ENCODE measurements at regions of chr2 and their contacts with region 1.

Region 1: DNA sequence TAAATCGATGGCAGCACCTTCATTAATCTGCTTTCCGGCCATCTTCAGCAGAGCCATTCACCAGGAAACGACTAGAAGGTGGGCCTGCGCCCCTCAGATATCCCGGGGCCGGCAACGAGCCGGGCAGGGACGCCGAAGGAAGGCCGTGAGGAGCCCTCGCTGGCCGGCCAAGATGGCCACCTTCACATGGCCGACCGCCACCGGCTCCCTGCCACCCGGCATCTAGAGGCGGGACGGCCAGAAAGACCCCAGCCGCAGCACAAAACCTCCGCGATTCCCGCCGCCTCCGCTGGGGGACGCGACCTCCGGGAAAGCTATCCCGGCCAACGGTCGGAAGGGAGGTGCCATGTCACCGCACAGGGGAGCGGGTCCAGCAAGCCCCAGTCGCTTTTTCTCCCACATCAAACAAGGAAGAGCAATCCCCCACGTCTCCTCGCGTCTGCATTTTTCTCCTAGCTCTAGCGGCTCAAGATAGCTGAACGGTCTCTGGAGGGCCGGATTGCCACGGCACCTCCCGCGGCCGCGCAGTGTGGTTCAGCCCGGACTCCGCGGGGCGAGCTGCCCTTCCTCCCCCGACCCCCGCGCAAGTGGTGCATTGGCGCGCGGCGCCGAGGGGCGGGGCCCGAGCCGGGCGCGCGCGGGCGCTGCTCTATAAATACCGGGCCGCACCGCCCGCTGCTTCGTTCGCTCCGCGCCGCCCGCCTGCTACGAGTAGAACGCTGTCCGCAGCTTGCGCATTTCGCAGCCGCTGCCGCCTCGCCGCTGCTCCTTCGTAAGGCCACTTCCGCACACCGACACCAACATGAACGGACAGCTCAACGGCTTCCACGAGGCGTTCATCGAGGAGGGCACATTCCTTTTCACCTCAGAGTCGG is at the start of gene MAT2A:
- DNase-seq: peak; percentile 98
- H3K4me3 Mint-ChIP-seq: peak within 1 kb of the TSS; percentile 79
- H3K27ac Mint-ChIP-seq: peak within 1 kb of the TSS; percentile 99
- H3K4me1 Mint-ChIP-seq: peaks cover 35% of the 10 kb centered on the region
- H3K27me3 Mint-ChIP-seq: no peaks in the 10 kb centered on the region
- CTCF ChIP-seq: peak; percentile 73
- total RNA-seq, gene MAT2A: 387 and 393 TPM in 2 replicates

Region 2: GRCh38 chr2:85291425-85292023 is 247.2 kb before region 1 on chr2:
- CTCF ChIA-PET with region 1: no interaction called
- intact Hi-C with region 1: no loop called
- DNase-seq: no peak
- H3K4me3 Mint-ChIP-seq: no peak overlapping the region
- H3K27ac Mint-ChIP-seq: peak overlapping the region; percentile 55
- H3K4me1 Mint-ChIP-seq: peaks cover 56% of the 10 kb centered on the region
- H3K27me3 Mint-ChIP-seq: no peaks in the 10 kb centered on the region
- CTCF ChIP-seq: no peak

Region 3: DNA sequence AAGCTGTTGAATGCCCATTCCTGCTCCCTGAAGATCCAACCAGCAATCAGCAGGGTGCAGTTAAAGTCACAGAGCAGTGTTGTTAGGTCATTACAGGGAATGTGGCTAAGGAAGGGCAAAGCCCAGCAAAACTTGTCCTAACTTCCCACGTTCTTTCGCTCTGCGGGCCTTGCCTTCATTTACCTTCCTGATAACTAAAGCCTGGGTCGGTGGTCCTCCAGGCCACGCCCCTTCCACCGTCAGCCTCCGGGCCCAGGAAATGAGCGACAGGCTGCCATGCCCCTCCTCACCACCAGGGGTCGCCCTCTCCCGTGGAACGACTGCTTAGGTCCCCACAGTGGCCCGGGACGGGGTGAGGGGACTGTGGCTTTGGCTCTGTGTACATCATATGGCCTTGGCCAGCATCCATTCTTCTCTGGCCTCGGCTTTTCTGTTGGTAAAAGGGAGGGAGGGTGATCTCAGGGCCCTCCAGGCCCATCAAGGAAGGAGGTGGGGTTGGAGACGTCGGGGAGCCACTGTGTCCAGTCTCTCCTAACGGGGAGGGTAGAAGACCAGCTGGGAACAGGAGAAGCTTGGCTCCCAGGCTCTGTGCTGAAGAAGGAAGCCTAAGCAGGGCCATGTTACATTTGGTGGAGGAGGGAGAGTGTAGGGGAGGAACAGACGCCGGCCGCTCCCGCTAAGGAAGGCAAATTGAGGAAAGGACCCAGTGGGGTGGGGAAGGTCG is 118.0 kb before region 1 on chr2:
- CTCF ChIA-PET with region 1: interaction called, 45 read pairs
- intact Hi-C with region 1: loop called (anchors 2 kb)
- DNase-seq: peak; percentile 94
- H3K4me3 Mint-ChIP-seq: peak overlapping the region; percentile 56
- H3K27ac Mint-ChIP-seq: peak overlapping the region; percentile 84
- H3K4me1 Mint-ChIP-seq: peaks cover 37% of the 10 kb centered on the region
- H3K27me3 Mint-ChIP-seq: no peaks in the 10 kb centered on the region
- CTCF ChIP-seq: peak; percentile 97

Region 4: DNA sequence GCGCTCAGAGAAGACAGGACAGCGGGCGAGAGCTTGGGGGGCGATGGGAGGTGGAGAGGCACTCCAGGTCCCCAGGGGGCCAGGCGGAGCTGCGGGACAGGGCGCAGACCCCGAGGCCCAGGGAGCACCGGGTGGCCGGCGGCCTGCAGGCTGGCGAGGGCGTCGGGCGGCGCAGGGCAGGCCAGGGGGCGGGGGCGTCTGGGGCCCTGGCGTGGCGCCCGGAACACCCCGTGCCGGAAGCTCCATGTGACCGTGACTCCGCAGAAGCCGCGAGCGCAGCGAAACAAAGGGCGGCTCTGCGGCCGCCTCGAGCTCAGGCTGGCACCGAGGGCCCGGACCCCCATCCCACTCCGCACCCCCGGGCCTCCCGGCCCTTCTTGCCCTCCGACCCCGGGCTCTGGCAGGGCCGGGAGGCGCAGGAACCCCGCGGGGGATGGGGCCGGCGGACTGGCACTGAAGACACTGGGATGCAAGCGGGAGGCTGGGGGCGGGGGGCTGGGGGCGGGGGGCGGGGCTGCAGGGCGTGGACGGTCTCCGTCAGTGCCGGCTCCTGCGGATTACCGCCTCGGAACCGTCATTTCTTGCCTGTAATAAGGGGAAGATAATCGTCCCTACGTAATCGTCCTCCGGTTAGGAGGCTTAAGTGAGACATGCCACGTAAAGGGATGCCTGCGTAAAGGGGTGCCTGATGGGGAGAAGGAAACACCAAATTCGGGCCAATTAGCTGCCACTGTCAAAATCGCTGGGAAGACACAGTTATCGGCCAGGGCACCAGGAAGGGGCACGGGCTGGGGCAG is 101.0 kb before region 1 on chr2:
- CTCF ChIA-PET with region 1: interaction called, 8 read pairs
- intact Hi-C with region 1: loop called (anchors 5 kb)
- DNase-seq: peak; percentile 88
- H3K4me3 Mint-ChIP-seq: peak overlapping the region; percentile 62
- H3K27ac Mint-ChIP-seq: peak overlapping the region; percentile 87
- H3K4me1 Mint-ChIP-seq: peaks cover 28% of the 10 kb centered on the region
- H3K27me3 Mint-ChIP-seq: no peaks in the 10 kb centered on the region
- CTCF ChIP-seq: no peak

Region 5: GRCh38 chr2:85468704-85469349 is 69.9 kb before region 1 on chr2:
- CTCF ChIA-PET with region 1: no interaction called
- intact Hi-C with region 1: loop called (anchors 2 kb)
- DNase-seq: peak; percentile 72
- H3K4me3 Mint-ChIP-seq: no peak overlapping the region
- H3K27ac Mint-ChIP-seq: peak overlapping the region; percentile 61
- H3K4me1 Mint-ChIP-seq: peaks cover 30% of the 10 kb centered on the region
- H3K27me3 Mint-ChIP-seq: no peaks in the 10 kb centered on the region
- CTCF ChIP-seq: no peak

Region 6: DNA sequence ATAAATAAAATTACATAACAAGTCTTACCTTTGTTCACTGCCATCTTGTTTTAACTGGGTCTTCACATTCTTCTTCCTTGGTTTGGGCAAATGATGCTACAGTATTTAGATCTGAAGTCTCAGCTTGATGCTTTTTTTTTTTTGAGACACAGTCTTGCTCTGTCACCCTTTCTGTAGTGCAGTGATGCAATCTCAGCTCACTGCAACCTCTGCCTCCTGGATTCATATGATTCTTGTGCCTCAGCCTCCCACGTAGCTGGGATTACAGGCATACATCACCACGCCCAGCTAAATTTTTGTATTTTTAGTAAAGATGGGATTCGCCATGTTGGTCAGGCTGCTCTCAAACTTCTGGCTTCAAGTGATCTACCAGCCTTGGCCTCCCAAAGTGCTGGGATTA is 52.9 kb before region 1 on chr2:
- CTCF ChIA-PET with region 1: no interaction called
- intact Hi-C with region 1: no loop called
- DNase-seq: no peak
- H3K4me3 Mint-ChIP-seq: no peak overlapping the region
- H3K27ac Mint-ChIP-seq: no peak overlapping the region
- H3K4me1 Mint-ChIP-seq: no peaks in the 10 kb centered on the region
- H3K27me3 Mint-ChIP-seq: no peaks in the 10 kb centered on the region
- CTCF ChIP-seq: no peak

Region 7: GRCh38 chr2:85504778-85505323 is 33.9 kb before region 1 on chr2:
- CTCF ChIA-PET with region 1: interaction called, 11 read pairs
- intact Hi-C with region 1: loop called (anchors 1 kb)
- DNase-seq: peak; percentile 52
- H3K4me3 Mint-ChIP-seq: no peak overlapping the region
- H3K27ac Mint-ChIP-seq: peak overlapping the region; percentile 57
- H3K4me1 Mint-ChIP-seq: peaks cover 49% of the 10 kb centered on the region
- H3K27me3 Mint-ChIP-seq: no peaks in the 10 kb centered on the region
- CTCF ChIP-seq: no peak

Region 8: DNA sequence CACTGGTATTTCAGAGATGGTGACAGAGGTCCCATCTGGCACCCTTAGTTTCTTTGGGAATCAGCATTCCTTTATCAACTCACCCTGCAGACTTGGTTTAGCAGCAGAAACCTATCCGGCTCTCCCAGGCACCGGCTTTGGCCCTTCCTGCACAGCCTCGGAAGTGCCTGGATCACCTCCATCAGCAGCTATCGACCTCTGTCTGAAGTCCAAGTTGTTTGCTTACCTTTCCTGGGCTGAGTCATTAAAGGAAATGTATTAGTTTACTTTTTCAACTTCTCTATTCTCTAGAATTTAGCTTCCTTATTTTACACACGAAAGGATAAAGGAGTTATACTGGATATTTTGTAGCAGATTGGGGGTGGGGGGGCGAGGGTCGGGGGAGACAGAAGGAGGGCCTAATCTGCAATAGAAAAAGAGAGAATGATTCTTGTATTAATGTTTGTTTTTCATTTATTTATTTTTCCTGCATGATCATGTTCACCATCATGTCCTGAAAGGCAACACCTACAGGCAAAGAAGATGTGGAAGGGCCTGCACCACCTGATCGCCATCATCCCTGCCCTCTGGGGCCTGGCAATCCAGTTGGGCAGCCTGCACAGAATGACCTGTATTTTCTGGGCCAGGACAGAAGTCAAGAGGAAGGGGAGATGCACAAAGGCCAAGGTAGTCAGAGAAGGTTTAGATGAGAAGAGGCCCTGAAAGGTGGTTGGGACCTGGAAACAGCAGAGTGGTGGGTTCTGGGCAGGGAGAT is 21.9 kb before region 1 on chr2:
- CTCF ChIA-PET with region 1: interaction called, 3 read pairs
- intact Hi-C with region 1: loop called (anchors 2 kb)
- DNase-seq: peak; percentile 78
- H3K4me3 Mint-ChIP-seq: no peak overlapping the region
- H3K27ac Mint-ChIP-seq: peak overlapping the region; percentile 78
- H3K4me1 Mint-ChIP-seq: peaks cover 38% of the 10 kb centered on the region
- H3K27me3 Mint-ChIP-seq: no peaks in the 10 kb centered on the region
- CTCF ChIP-seq: no peak

Region 9: GRCh38 chr2:85551698-85552678 is 13.3 kb after region 1 on chr2:
- CTCF ChIA-PET with region 1: interaction called, 20 read pairs
- intact Hi-C with region 1: no loop called
- DNase-seq: peak; percentile 87
- H3K4me3 Mint-ChIP-seq: no peak overlapping the region
- H3K27ac Mint-ChIP-seq: no peak overlapping the region
- H3K4me1 Mint-ChIP-seq: peaks cover 10% of the 10 kb centered on the region
- H3K27me3 Mint-ChIP-seq: no peaks in the 10 kb centered on the region
- CTCF ChIP-seq: peak; percentile 77

Region 10: GRCh38 chr2:86017901-86018896 is 479.5 kb after region 1 on chr2:
- CTCF ChIA-PET with region 1: no interaction called
- intact Hi-C with region 1: no loop called
- DNase-seq: peak; percentile 71
- H3K4me3 Mint-ChIP-seq: no peak overlapping the region
- H3K27ac Mint-ChIP-seq: no peak overlapping the region
- H3K4me1 Mint-ChIP-seq: no peaks in the 10 kb centered on the region
- H3K27me3 Mint-ChIP-seq: peaks cover 3% of the 10 kb centered on the region
- CTCF ChIP-seq: no peak